ENCODE measurements at regions of chr6 and their contacts with region 1.

Region 1: DNA sequence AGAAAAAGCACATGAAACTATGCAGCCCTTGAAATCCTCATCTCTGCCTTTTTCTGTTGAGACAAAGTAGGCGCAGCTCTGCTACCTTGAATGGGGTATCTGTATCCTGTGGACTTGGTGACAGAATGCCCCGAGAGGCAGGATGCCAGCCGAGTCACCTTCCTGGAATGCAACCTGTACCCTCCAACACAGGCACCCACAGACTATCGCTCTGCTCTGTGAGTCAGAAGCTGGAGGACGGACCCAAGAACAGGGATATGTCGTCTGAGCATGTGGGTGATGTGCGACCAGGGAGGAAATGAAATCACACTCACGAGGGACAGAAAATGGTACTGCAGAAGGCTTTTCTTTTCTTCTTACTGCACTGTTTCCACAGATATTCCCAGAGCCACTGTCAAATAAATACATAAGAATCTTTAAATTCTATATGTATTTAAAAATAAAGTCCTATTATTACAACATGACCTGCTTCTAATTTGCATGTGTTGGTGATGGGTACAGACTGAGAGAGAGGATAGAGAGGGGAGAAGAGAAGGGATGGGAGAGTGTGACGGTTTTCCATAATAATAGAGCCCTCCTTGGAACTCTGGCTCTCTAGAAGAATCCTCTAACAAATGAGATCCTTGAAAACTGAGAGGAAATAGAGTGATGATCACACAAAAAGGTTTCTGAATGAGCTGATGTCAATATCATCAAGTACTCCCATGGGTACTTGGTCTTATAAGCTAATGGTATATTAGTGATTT is 308.1 kb downstream of the FOXC1 start:
- DNase-seq: peak; percentile 85
- H3K4me3 Mint-ChIP-seq: no peak overlapping the region
- H3K27ac Mint-ChIP-seq: peak overlapping the region; percentile 66
- H3K4me1 Mint-ChIP-seq: peaks cover 15% of the 10 kb centered on the region
- H3K27me3 Mint-ChIP-seq: no peaks in the 10 kb centered on the region
- CTCF ChIP-seq: no peak

Region 2: GRCh38 chr6:1767481-1768251 is 150.1 kb before region 1 on chr6:
- CTCF ChIA-PET with region 1: no interaction called
- intact Hi-C with region 1: loop called (anchors 10 kb)
- DNase-seq: peak; percentile 29
- H3K4me3 Mint-ChIP-seq: no peak overlapping the region
- H3K27ac Mint-ChIP-seq: peak overlapping the region; percentile 67
- H3K4me1 Mint-ChIP-seq: peaks cover 57% of the 10 kb centered on the region
- H3K27me3 Mint-ChIP-seq: no peaks in the 10 kb centered on the region
- CTCF ChIP-seq: no peak

Region 3: DNA sequence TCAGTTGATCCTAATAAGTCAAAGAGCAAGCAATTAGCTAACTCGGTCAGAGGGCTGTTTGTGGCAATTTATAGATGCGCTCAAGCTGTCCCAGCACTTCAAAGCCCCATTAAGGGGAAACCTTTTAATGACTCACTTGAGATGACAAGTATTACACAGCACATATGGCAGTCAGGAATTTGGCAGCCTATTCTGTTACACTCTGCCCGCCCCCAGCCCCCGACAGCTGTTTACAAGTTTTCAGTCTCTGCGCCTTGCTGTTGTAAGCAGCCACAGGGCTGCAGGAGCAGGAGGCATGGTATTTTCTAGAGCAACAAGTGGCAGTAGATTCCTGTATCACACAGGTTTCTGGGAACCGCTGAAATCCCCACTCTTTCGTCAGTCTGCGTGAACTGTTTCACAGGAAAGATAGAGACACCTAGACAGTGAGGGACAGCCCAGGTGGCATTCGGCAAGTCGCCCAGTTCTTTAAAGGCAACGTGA is 45.1 kb before region 1 on chr6:
- CTCF ChIA-PET with region 1: no interaction called
- intact Hi-C with region 1: no loop called
- DNase-seq: no peak
- H3K4me3 Mint-ChIP-seq: no peak overlapping the region
- H3K27ac Mint-ChIP-seq: no peak overlapping the region
- H3K4me1 Mint-ChIP-seq: no peaks in the 10 kb centered on the region
- H3K27me3 Mint-ChIP-seq: no peaks in the 10 kb centered on the region
- CTCF ChIP-seq: no peak

Region 4: DNA sequence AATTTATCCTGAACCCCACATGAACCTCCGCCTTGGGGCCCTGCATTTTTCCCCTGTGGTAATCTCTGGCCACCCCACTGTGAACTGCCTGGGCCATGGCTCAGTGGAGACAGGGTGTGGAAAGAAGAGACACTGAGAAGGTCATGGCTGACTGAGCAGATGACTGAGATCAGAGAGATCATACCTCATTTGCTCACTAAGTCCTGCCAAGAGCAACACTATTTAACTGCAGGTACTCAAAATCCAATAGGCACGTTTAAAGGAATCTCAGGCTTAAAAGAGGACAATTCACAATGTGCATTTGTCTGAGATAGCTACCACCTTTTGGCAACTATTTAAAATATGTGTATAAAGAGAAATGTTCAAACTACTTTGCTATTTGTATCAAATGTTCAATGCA is 22.6 kb after region 1 on chr6:
- CTCF ChIA-PET with region 1: no interaction called
- intact Hi-C with region 1: no loop called
- DNase-seq: no peak
- H3K4me3 Mint-ChIP-seq: no peak overlapping the region
- H3K27ac Mint-ChIP-seq: no peak overlapping the region
- H3K4me1 Mint-ChIP-seq: no peaks in the 10 kb centered on the region
- H3K27me3 Mint-ChIP-seq: no peaks in the 10 kb centered on the region
- CTCF ChIP-seq: no peak

Region 5: GRCh38 chr6:2363211-2363610 is 445.4 kb after region 1 on chr6:
- CTCF ChIA-PET with region 1: interaction called, 10 read pairs
- intact Hi-C with region 1: no loop called
- DNase-seq: no peak
- H3K4me3 Mint-ChIP-seq: no peak overlapping the region
- H3K27ac Mint-ChIP-seq: no peak overlapping the region
- H3K4me1 Mint-ChIP-seq: peaks cover 8% of the 10 kb centered on the region
- H3K27me3 Mint-ChIP-seq: no peaks in the 10 kb centered on the region
- CTCF ChIP-seq: no peak